HEK293 (cell line): ENCODE measurements at regions of chr19 and their contacts with region 1.

Region 1: GRCh38 chr19:45469132-45469944 is 1.5 kb downstream of the FOSB start:
- H3K4me3 ChIP-seq: peak overlapping the region; percentile 65
- H3K27ac ChIP-seq: peak overlapping the region; percentile 45
- H3K4me1 ChIP-seq: peaks cover 5% of the 10 kb centered on the region; the same call in 1 of the 2 replicates
- CTCF ChIP-seq: peak; percentile 6; the same call in 1 of the 2 replicates

Region 2: DNA sequence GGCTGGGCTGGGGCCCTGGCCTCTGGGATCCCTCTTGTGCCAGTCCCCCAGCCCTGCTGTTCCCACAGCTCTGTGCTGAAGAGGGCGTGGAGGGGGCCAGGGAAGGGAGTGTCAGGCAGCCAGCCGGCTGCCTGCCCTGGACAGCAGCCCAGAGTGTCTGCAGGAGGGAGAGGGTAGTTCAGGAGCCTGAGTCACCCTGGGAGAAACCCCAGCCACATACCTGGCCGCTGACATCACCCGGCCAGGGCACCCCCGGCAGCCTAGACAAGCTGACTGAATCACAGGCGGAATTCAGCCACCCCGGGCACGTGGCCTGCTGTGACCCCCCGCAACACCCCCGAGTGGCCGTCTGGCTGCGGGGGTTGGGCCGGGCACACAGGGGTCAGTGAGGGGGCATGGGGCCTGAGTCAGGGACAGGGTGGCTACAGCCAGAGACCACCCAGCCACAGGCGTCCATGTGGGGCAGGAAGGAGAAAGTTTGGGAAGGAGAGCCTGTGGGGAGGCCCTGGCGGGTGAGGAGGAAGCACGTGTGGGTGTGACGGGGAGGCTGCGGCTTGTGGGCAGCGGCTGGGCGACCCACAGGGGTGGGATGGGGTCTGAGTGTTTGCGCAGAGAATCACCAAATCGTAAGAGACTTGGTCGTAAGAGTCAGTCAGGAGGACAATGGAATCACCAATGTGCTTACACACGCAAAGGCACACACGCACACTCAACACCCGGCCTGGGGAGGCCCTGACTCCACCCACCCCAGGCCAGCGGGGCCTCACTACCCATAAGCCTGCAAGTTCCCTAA is 13.4 kb before region 1 on chr19:
- CTCF ChIA-PET with region 1: interaction called, 4 read pairs
- POLR2A ChIA-PET with region 1: interaction called, 52 read pairs
- H3K4me3 ChIP-seq: peak overlapping the region; percentile 23
- H3K27ac ChIP-seq: 0 out of 2 replicates have a peak overlapping the region, but pooled peaks have one; percentile 11
- H3K4me1 ChIP-seq: peaks cover 7% of the 10 kb centered on the region; the same call in 1 of the 2 replicates
- CTCF ChIP-seq: no peak

Region 3: DNA sequence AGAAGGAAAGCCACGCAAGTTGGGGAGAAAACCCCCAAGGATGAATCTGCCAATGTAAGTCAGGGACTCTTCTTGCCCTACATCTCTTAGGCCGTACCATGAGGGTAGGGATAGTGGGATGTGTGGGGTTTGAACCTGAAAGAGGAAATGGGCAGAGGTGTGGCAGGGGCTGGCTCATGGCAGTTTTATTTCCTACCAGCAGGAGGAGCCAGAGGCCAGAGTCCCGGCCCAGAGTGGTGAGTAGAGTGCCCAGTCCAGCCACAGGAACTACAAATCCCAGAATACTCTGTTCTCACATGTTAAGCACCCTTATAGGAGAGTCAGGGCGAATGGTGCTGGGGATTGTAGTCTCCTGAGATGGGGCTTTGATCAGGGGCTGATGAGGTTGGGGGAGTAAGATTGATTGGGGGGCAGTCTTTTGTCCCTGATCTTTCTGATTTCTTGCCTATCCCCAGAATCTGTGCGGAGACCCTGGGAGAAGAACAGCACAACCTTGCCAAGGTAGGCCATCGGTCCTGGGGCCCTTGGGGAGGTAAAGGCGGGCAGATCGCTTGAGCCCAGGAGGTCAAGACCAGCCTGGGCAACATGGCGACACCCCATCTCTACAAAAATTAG is 54.4 kb after region 1 on chr19:
- CTCF ChIA-PET with region 1: no interaction called
- POLR2A ChIA-PET with region 1: no interaction called
- H3K4me3 ChIP-seq: no peak overlapping the region
- H3K27ac ChIP-seq: no peak overlapping the region
- H3K4me1 ChIP-seq: no peaks in the 10 kb centered on the region
- CTCF ChIP-seq: peak; percentile 89